Vagina (tissue), 2 donors: ENCODE measurements at regions of chr1 and their contacts with region 1.

Region 1: GRCh38 chr1:168603501-168604110 is 27.2 kb downstream of the XCL1 start:
- DNase-seq: no peak
- H3K4me3 ChIP-seq: no peak overlapping the region
- H3K27ac ChIP-seq: no peak overlapping the region
- H3K4me1 ChIP-seq: no peaks in the 10 kb centered on the region
- H3K27me3 ChIP-seq: no peaks in the 10 kb centered on the region
- CTCF ChIP-seq: peak; percentile 50 to 77 (median 72)
- POLR2A ChIP-seq: no peak

Region 2: GRCh38 chr1:168567007-168567406 is 36.6 kb before region 1 on chr1:
- intact Hi-C with region 1: no loop called
- DNase-seq: no peak
- H3K4me3 ChIP-seq: no peak overlapping the region
- H3K27ac ChIP-seq: no peak overlapping the region
- H3K4me1 ChIP-seq: no peaks in the 10 kb centered on the region
- H3K27me3 ChIP-seq: no peaks in the 10 kb centered on the region
- CTCF ChIP-seq: no peak
- POLR2A ChIP-seq: no peak

Region 3: GRCh38 chr1:168920456-168921094 is 317.0 kb after region 1 on chr1:
- intact Hi-C with region 1: no loop called
- DNase-seq: no peak
- H3K4me3 ChIP-seq: no peak overlapping the region
- H3K27ac ChIP-seq: no peak overlapping the region
- H3K4me1 ChIP-seq: peaks cover 7% of the 10 kb centered on the region
- H3K27me3 ChIP-seq: no peaks in the 10 kb centered on the region
- CTCF ChIP-seq: no peak
- POLR2A ChIP-seq: no peak

Region 4: DNA sequence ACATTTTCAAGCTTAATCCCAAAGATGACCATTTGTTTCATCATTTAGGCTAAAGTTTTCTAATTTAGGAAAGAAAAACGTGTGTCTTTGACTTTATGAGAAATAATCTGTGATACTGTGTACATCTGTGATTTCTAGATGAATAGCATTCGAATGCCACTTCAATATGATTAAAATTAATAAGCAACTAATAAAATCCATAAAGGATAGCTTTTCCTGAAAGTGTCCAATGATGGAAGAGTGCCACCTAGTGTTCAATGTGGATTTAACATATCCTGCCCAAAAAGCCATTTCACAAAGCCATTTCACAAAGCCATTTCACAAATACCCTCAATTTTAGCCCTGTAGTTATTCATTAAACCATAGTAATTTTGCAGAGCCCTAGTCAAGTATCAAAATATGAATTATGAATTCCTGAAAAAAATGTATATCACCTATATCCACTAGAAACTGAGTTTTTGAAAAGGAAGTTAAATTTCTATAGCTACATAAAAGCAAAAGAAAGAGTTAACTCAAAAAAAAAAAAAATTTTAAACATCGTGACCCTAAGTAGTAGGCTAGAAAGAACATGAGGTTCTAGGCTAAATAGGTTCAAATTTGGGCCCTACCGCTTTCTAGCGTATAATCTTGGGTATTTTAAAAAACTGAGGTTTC is 744.9 kb after region 1 on chr1:
- intact Hi-C with region 1: loop called (anchors 5 kb)
- DNase-seq: no peak
- H3K4me3 ChIP-seq: no peak overlapping the region
- H3K27ac ChIP-seq: no peak overlapping the region
- H3K4me1 ChIP-seq: no peaks in the 10 kb centered on the region
- H3K27me3 ChIP-seq: no peaks in the 10 kb centered on the region
- CTCF ChIP-seq: peak; percentile 31 to 68 (median 59)
- POLR2A ChIP-seq: no peak